WTC11 (cell line): ENCODE measurements at regions of chr5 and their contacts with region 1.

Region 1: DNA sequence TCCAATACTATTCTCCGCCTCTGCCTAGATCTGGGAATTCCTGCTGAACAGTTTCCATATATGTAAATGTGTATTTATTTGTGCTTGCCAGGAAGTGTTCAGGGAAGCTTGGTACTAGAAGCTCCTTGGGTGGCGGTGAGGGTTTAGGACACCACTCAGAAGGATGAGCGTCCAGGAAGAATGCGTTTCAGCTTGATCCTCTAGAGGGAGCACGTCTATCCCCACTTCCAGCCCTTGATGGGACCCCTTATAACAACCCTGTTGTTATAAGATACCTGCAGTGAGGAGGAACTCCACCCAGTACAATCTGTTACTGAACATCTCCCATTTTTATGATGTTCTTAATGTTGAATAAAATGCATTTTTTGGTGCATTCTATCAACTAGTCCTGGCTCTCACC is 88.9 kb downstream of the CYFIP2 start:
- DNase-seq: peak; percentile 42
- ATAC-seq: peak; percentile 99
- H3K4me3 Mint-ChIP-seq: no peak overlapping the region
- H3K27ac Mint-ChIP-seq: no peak overlapping the region
- H3K4me1 Mint-ChIP-seq: peaks cover 2% of the 10 kb centered on the region; the same call in 1 of the 2 replicates
- H3K27me3 Mint-ChIP-seq: no peaks in the 10 kb centered on the region
- CTCF ChIP-seq: peak; percentile 53

Region 2: GRCh38 chr5:157328277-157328912 is 26.4 kb before region 1 on chr5:
- CTCF ChIA-PET with region 1: interaction called, 17 read pairs
- POLR2A ChIA-PET with region 1: no interaction called
- DNase-seq: peak; percentile 45
- ATAC-seq: peak; percentile 98
- H3K4me3 Mint-ChIP-seq: no peak overlapping the region
- H3K27ac Mint-ChIP-seq: no peak overlapping the region
- H3K4me1 Mint-ChIP-seq: no peaks in the 10 kb centered on the region
- H3K27me3 Mint-ChIP-seq: no peaks in the 10 kb centered on the region
- CTCF ChIP-seq: peak; percentile 76

Region 3: DNA sequence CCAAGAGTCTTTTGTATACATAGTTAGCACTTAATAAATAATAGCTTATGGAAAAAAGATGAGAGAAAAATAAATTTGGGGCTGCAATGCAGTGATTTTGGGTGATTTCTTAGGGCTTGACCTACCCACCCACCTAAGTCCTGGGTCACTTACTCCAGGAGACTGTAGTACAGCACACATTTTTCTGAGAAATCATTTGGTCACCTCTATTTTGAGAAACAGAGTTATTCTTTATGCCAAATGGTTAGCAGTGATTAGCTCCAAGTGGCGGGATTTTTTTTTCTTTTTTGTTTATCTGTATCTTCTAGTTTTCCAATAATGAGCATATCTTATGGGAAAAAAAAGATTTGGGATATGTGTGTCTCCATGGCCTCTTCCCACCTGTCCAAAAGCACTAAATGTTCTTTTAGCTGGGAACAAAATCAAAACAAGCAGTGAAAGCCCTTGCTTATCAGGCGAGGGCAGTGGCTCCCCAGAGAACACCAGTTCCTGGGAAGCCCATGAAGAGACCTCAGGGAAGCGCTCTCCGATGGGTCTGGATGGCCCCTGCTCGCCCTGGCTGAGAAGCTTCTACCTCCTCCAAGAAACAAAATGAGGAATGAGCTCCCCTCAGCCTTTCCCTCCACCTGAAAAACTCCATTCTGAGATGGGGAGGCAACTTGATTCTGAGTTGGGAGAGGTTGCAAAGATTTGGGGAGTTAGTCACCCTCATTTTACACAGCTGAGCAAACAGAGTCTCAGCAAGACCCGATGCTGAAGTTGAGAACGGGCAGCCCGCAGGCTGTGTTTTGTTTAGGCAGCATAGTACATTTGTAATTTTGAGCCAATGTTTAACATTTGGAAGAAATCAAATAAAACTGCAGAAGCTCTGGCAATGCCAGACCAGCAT is 19.0 kb before region 1 on chr5:
- CTCF ChIA-PET with region 1: interaction called, 37 read pairs
- POLR2A ChIA-PET with region 1: no interaction called
- DNase-seq: no peak
- ATAC-seq: no peak
- H3K4me3 Mint-ChIP-seq: no peak overlapping the region
- H3K27ac Mint-ChIP-seq: no peak overlapping the region
- H3K4me1 Mint-ChIP-seq: no peaks in the 10 kb centered on the region
- H3K27me3 Mint-ChIP-seq: no peaks in the 10 kb centered on the region
- CTCF ChIP-seq: no peak

Region 4: GRCh38 chr5:157342822-157343402 is 11.9 kb before region 1 on chr5:
- CTCF ChIA-PET with region 1: interaction called, 37 read pairs
- POLR2A ChIA-PET with region 1: interaction called, 3 read pairs
- DNase-seq: peak; percentile 66
- ATAC-seq: peak; percentile 93
- H3K4me3 Mint-ChIP-seq: no peak overlapping the region
- H3K27ac Mint-ChIP-seq: no peak overlapping the region
- H3K4me1 Mint-ChIP-seq: no peaks in the 10 kb centered on the region
- H3K27me3 Mint-ChIP-seq: no peaks in the 10 kb centered on the region
- CTCF ChIP-seq: peak; percentile 55; the same call in 1 of the 2 replicates